ENCODE measurements at regions of chr12 and their contacts with region 1.

Region 1: DNA sequence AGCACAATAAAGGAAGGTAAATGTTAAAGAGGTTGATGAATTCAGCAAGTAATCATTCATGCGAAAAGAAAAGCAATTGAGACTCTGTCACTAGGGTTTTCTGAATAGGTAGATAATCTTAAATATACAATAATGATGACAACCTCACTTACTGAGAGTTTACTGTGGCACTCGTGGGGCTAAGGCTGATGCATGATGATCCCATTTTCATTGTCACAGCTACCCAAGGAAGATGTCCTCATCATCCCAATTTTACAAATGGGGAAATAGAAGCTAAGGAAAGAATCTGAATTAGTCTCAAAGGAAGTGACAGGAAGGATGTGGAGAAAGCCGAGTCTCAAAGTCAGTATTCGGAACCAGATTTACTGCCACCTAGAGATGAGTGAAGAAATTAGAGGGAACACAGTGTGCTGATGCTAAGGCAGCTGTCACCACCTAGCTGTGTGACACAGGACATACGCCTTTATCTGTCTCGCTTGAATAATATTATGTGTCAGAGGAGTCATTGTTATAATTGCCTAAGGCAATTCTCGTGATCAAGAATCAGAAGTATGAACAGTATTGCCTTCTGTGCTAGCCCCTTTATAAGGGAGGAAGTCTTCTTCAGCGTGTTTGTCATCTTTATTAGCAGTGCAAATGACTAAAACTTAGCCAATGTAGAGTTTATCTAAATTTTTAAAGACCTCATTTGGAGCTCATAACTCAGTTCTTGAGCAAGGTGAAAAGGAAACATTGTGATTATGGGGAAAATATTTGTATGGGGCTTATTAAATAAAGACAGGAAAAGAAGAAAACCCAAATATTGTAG is 63.2 kb downstream of the ERGIC2 start:
- DNase-seq: peak; percentile 35
- H3K4me3 Mint-ChIP-seq: no peak overlapping the region
- H3K27ac Mint-ChIP-seq: no peak overlapping the region
- H3K4me1 Mint-ChIP-seq: peaks cover 4% of the 10 kb centered on the region
- H3K27me3 Mint-ChIP-seq: peaks cover 4% of the 10 kb centered on the region

Region 2: DNA sequence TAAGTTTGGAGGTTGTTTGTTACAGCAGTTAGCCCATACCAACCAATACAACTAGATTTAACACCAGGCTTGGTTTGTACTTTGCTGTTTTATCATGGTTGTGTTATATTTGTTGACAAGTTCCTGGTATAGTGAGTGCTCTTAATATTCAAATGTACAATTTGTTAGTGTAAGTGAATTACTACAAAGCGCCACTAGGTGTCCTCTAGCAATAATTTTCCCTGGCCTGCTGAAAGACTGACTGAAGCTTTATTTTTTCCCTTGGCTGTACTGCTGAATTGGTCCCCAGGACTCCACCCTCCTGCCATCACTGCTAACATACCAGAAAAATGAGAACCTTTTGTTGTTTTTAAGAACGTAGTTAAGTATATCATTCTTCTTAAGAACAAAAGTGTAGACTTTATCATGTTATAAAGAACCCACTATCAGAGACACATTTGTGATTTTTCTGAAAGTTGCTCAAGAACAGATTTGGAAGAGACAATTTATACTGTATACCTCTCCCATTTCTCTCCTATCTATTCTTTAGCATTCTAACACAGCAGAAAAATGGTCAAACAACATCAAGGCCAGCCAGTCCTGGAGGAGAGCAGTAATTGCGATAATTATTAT is 244.0 kb before region 1 on chr12:
- intact Hi-C with region 1: loop called (anchors 1 kb)
- DNase-seq: no peak
- H3K4me3 Mint-ChIP-seq: no peak overlapping the region
- H3K27ac Mint-ChIP-seq: no peak overlapping the region
- H3K4me1 Mint-ChIP-seq: no peaks in the 10 kb centered on the region
- H3K27me3 Mint-ChIP-seq: peaks cover 29% of the 10 kb centered on the region

Region 3: DNA sequence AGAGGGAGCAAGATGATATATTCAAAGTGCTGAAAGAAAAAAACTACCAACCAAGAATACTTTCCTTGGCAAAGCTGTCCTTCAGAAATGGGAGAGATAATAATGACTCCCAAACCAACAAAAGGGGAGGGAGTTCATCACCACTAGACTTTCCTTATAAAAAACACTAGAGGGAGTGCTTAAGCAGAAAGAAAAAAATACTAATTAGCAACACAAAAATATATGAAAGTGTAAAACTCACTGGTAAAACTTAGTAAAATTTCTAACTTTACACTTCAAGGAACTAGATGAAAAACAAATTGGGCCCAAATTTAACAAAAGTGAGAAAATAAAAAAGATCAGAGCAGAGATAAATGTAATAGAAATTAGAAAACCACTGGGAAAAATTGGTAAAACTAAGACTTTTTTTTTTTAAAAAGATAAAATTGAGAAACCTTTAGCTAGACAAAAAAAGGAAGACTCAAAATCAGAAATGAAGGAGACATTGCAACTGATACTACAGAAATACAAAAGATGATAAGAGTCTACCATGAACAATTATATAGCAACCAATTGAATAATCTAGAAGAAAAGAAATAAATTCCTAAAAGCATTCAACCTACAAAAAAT is 229.0 kb before region 1 on chr12:
- intact Hi-C with region 1: loop called (anchors 1 kb)
- DNase-seq: no peak
- H3K4me3 Mint-ChIP-seq: no peak overlapping the region
- H3K27ac Mint-ChIP-seq: no peak overlapping the region
- H3K4me1 Mint-ChIP-seq: peaks cover 2% of the 10 kb centered on the region
- H3K27me3 Mint-ChIP-seq: peaks cover 58% of the 10 kb centered on the region

Region 4: GRCh38 chr12:29148911-29149690 is 168.7 kb before region 1 on chr12 and contains the start of gene FAR2:
- intact Hi-C with region 1: loop called (anchors 5 kb)
- DNase-seq: peak; percentile 33
- H3K4me3 Mint-ChIP-seq: peak within 1 kb of the TSS; percentile 83
- H3K27ac Mint-ChIP-seq: peak within 1 kb of the TSS; percentile 64
- H3K4me1 Mint-ChIP-seq: peaks cover 20% of the 10 kb centered on the region
- H3K27me3 Mint-ChIP-seq: peaks cover 68% of the 10 kb centered on the region
- total RNA-seq, gene FAR2: 3.8 and 4.3 TPM in 2 replicates

Measured in activated T-helper 2 cell treated with anti-CD3 and anti-CD28 coated beads, Interferon-gamma antibody, Interleukin-2, Interleukin-4, amounts not matched to agents 10 μg/mL and 5 μg/mL and 100 μg/mL, durations not matched to agents 14 hours and 24 hours and 36 hours (primary cell).